ENCODE measurements at regions of chr17 and their contacts with region 1.

Region 1: GRCh38 chr17:75371339-75371738 is 34.1 kb downstream of the GRB2 start:
- DNase-seq: no peak
- H3K4me3 Mint-ChIP-seq: peak overlapping the region; percentile 3
- H3K27ac Mint-ChIP-seq: peak overlapping the region; percentile 89
- H3K4me1 Mint-ChIP-seq: peaks cover 61% of the 10 kb centered on the region
- H3K27me3 Mint-ChIP-seq: no peaks in the 10 kb centered on the region

Region 2: DNA sequence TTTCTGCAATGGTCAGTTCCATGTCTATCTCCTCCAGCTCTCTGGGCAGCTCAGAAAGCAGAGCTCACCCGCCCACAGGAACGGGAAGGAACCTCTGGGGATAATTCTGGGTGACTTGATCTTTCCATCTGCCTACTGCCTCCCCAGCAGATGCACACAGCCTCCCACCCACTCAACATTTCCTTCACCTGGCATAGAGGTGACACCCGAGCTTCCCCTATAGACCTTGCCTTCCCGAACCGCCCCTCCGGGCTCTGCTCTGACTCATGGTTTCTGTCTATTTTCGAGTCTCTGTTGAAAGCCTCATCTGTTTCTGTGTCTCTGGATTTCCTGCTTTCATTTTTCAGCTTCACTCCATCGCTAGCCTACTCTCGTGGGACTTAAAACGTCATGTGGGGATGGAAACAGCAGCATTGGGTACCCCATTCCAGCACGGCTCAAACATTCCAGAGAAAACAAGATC is 121.3 kb before region 1 on chr17:
- intact Hi-C with region 1: no loop called
- DNase-seq: peak; percentile 64
- H3K4me3 Mint-ChIP-seq: peak overlapping the region; percentile 72
- H3K27ac Mint-ChIP-seq: peak overlapping the region; percentile 95
- H3K4me1 Mint-ChIP-seq: peaks cover 53% of the 10 kb centered on the region
- H3K27me3 Mint-ChIP-seq: no peaks in the 10 kb centered on the region

Region 3: DNA sequence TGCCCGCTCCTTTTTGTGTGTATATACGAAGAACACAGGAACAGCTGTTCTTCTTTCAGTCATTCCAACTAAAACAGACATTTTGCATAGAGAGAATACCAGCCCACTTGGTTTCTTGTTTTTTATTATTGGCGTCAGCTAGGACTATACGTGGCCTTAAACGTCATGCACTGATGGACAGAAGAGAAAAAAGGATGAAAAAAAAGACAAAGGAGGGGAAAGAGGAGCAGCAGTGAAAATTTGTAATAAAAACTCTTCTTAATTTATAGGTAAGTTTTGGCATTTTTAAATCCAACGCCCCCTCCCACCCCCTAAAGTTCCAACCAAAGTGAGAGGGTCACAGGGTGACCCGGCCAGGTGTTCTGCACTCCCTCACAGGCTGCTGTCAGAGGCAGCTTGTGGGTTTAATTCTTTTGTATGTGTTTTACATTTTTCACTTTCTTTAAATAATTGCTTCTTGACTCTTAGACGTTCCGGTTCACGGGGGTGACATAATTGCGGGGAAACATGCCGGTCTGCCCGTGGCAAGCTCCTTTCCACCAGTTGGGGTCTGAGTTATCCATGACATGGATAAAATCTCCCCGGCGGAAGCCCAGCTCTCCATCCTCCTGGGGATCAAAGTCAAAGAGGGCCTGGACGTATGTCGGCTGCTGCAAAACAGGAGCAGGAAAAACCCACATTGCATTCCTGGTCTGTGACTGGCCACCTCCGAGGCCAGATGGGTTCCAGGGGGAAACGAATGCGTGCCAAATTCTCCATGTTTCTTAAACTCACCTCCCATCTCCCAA is 51.2 kb before region 1 on chr17:
- intact Hi-C with region 1: loop called (anchors 5 kb)
- DNase-seq: no peak
- H3K4me3 Mint-ChIP-seq: no peak overlapping the region
- H3K27ac Mint-ChIP-seq: no peak overlapping the region
- H3K4me1 Mint-ChIP-seq: peaks cover 19% of the 10 kb centered on the region
- H3K27me3 Mint-ChIP-seq: no peaks in the 10 kb centered on the region

Region 4: GRCh38 chr17:75338335-75338734 is 33.0 kb before region 1 on chr17:
- intact Hi-C with region 1: loop called (anchors 1 kb)
- DNase-seq: no peak
- H3K4me3 Mint-ChIP-seq: peak overlapping the region; percentile 66
- H3K27ac Mint-ChIP-seq: peak overlapping the region; percentile 90
- H3K4me1 Mint-ChIP-seq: peaks cover 70% of the 10 kb centered on the region
- H3K27me3 Mint-ChIP-seq: no peaks in the 10 kb centered on the region

Region 5: DNA sequence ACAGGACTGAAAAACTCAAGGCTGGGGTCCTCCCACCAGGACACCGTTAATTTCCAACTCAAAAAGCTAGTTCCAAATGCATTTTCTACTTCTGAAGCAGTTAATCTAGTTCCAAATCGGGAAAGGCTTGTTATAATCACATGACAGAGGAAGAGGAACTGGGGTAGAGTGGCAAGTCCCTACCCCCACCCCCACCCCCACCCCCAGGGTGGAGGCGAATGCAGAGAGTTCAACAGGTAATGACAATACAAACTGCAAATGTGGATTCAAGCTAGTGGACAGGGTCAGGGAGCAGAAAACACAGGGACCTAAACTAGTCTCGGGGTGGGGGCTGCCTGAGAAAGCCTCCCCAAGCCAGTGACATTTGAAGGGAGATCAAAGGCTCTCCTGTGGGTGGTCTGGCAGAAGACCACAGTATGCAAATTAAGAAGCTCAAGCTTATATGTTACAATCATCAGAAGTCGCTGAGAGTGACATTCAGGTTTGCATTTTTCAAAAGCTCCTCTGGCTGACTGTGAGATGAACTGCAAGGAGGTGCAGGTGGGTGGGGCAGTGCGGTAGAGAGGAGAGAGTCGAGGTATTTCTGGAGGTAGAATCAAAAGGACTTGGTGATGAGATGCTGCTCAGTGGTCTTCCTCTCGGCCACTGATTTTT is 25.7 kb before region 1 on chr17:
- intact Hi-C with region 1: loop called (anchors 2 kb)
- DNase-seq: no peak
- H3K4me3 Mint-ChIP-seq: peak overlapping the region; percentile 73
- H3K27ac Mint-ChIP-seq: peak overlapping the region; percentile 87
- H3K4me1 Mint-ChIP-seq: peaks cover 82% of the 10 kb centered on the region
- H3K27me3 Mint-ChIP-seq: no peaks in the 10 kb centered on the region

Region 6: DNA sequence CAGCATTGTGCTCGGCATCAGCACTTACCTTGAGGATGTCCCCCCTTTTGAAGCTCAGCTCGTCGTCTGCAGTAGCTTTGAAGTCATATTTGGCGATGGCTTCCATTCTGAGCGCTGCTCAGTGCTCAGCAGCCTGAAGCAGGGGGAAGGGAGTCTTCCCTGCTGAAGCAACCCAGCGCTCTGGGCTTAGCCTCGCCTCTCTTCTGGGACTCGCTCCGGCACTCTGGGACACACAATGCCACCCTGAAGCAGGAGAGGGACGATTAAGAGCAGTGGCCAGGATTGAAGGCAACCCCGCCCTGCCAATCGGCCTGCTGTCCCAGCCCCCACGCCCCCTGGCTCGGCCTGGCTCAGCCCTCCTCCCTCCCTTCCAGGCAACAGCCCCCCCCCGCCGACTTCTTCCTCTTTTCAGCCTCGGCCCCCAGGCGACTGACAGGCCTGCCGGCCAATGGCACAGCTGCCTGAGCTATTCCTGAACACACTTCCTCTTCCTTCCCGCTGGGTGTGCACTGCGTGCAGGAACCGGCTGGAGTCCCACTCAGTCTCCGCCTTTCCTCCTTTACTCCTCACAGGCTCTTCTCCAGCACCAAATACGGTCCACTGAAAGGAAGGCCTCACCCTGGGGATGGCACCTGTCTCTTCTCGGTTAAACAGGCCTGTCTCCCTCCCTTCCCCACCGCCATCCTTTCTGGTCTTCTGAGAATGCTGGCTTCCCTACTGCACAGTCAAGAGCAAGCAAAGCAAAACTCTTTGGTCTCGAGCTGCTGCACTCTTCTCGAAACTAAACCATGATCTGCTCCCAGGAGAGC is 22.4 kb after region 1 on chr17:
- intact Hi-C with region 1: no loop called
- DNase-seq: peak; percentile 74
- H3K4me3 Mint-ChIP-seq: peak overlapping the region; percentile 90
- H3K27ac Mint-ChIP-seq: peak overlapping the region; percentile 50
- H3K4me1 Mint-ChIP-seq: peaks cover 69% of the 10 kb centered on the region
- H3K27me3 Mint-ChIP-seq: no peaks in the 10 kb centered on the region